ENCODE measurements at regions of chr3 and their contacts with region 1.

Region 1: DNA sequence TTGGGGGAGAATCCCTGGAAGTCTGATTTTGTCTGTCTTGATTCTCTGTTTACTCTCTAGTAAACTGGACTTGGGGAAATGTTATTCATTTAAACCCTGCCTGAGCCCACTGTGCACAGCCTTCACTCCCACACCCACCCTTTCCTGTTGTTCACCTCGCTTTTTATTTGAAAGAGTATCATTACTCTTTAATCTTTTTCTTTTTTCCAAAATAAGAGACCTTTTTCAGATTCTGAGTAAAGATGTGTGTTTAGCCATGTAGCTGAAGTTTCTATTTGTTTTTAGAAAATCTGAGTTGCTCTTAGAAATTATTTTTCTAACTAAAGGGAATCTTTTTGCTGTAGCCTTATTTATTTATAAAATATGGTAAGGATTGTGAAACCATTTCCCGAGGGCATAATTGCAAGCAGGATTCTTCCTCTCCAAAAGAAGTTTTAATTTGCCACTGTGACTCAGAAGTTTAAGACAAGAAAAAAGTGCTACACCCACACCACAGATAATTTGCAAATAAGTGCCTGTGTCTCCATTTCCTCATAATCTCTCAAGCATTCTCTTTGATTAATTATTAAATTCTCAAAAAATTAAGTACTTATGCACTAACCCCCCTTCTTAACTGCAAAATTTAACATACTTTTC is 43.4 kb downstream of the RASA2 start:
- DNase-seq: peak in 8 of 14 experiments; percentile 6 to 71 (median 24)
- ATAC-seq: peak; percentile 81
- H3K4me3 ChIP-seq: peak overlapping the region; percentile 13
- H3K4me3 Mint-ChIP-seq: peak overlapping the region; percentile 86
- H3K27ac ChIP-seq: peak overlapping the region; percentile 51 to 64
- H3K27ac Mint-ChIP-seq: peak overlapping the region; percentile 94
- H3K4me1 ChIP-seq: peaks cover 8% of the 10 kb centered on the region
- H3K4me1 Mint-ChIP-seq: peaks cover 83% of the 10 kb centered on the region
- H3K27me3 ChIP-seq: no peaks in the 10 kb centered on the region
- H3K27me3 Mint-ChIP-seq: no peaks in the 10 kb centered on the region
- CTCF ChIP-seq: no peak

Region 2: GRCh38 chr3:141553055-141553454 is 22.8 kb after region 1 on chr3:
- CTCF ChIA-PET with region 1: interaction called, 4 read pairs
- POLR2A ChIA-PET with region 1: interaction called, 13 read pairs
- intact Hi-C with region 1: loop called in 1 of 2 experiments (anchors 2 kb)
- DNase-seq: peak in 5 of 14 experiments; percentile 7 to 90 (median 71)
- ATAC-seq: peak; percentile 84
- H3K4me3 ChIP-seq: no peak overlapping the region
- H3K4me3 Mint-ChIP-seq: peak overlapping the region; percentile 47
- H3K27ac ChIP-seq: no peak overlapping the region
- H3K27ac Mint-ChIP-seq: peak overlapping the region; percentile 81
- H3K4me1 ChIP-seq: peaks cover 17% of the 10 kb centered on the region
- H3K4me1 Mint-ChIP-seq: peaks cover 63% of the 10 kb centered on the region
- H3K27me3 ChIP-seq: no peaks in the 10 kb centered on the region
- H3K27me3 Mint-ChIP-seq: no peaks in the 10 kb centered on the region
- CTCF ChIP-seq: no peak

Measured in CD4-positive, alpha-beta T cell (primary cell).